ENCODE measurements at regions of chr3 and their contacts with region 1.

Region 1: DNA sequence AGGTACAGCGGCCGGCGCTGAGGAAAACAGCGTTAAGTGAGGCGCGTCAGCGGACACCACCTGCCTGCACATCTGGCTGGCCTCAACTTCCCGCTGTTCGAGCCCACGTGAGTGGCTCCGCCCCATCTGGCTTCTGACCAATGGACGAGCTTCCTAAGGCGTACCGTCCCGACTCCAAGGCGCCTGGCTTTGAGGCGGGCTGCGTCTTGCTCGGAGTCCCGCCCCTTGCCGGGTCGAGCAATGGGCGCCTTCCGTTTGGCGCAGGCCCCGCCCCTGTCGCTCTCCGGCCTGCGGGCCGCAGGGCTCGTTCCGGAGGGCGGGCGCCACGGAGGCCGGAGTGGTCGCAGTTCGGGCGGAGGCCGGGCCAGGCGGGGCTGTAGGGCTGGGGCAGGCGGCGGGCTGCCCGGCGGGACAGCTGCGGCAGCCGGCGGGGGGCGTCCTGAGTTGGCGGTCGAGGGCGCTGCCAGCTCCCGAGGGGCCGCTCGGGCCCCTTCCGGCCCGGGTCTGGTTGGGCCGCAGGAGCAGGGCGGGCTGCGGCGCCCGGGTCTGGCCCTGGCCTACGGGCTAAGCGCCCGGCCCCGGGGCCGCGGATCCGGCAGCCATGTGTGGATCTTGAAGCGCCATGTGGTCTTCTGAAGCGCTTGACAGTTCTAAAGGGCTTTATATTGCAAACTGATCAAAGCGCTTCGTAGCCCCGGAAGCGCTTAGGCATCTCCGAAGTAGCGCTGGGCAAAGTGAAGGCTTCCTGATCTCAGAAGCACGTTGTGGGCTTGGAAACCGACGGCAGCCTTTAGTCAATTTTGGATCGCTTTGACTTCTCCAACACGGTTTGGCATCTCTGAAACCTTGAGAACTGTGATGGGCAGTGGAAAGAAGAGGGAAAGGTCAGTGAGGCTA is at the start of gene TATDN2:
- H3K4me3 Mint-ChIP-seq: peak within 1 kb of the TSS; percentile 94
- H3K27ac Mint-ChIP-seq: peak within 1 kb of the TSS; percentile 85
- H3K4me1 Mint-ChIP-seq: peaks cover 44% of the 10 kb centered on the region
- H3K27me3 Mint-ChIP-seq: no peaks in the 10 kb centered on the region

Region 2: GRCh38 chr3:10232137-10232536 is 16.3 kb before region 1 on chr3:
- intact Hi-C with region 1: loop called (anchors 2 kb)
- H3K4me3 Mint-ChIP-seq: peak overlapping the region; percentile 68
- H3K27ac Mint-ChIP-seq: peak overlapping the region; percentile 89
- H3K4me1 Mint-ChIP-seq: peaks cover 24% of the 10 kb centered on the region
- H3K27me3 Mint-ChIP-seq: no peaks in the 10 kb centered on the region

Measured in dendritic cell treated with granulocyte-macrophage colony-stimulating factor and Interleukin-4, amounts not matched to agents 40 ng/mL and 50 ng/mL, for 4 days (primary cell).